Activated CD8-positive, alpha-beta memory T cell treated with anti-CD3 and anti-CD28 coated beads, Interleukin-2, amount 10 ng/mL, durations not matched to agents 7 days and 5 days (primary cell): ENCODE measurements at regions of chr3 and their contacts with region 1.

Region 1: GRCh38 chr3:150495563-150496168 is 50.6 kb downstream of the SERP1 start:
- DNase-seq: no peak
- ATAC-seq: peak; percentile 42
- H3K4me3 Mint-ChIP-seq: no peak overlapping the region
- H3K27ac Mint-ChIP-seq: no peak overlapping the region
- H3K4me1 Mint-ChIP-seq: no peaks in the 10 kb centered on the region
- H3K27me3 Mint-ChIP-seq: peaks cover 4% of the 10 kb centered on the region

Region 2: DNA sequence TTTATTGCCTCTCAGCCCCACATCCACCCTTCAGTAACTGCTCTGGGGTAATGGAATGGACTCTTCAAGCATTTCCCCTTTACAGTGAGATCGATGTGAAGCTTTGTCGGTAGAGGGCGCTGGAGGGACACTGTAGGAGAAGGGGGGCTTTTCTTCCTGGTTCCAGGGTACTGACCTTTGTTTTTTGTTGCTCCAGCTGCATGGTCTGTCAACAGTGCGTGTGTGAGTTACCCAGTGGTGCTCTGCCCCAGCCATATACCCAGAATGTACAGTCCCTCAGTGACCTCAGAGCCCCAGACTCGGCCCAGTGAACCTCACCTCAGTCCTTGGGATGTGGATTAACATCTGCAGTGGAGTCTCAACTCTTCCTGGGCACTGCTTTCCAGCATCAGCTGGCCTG is 267.8 kb before region 1 on chr3:
- CTCF ChIA-PET with region 1: interaction called, 19 read pairs
- DNase-seq: peak; percentile 64
- ATAC-seq: peak; percentile 51
- H3K4me3 Mint-ChIP-seq: no peak overlapping the region
- H3K27ac Mint-ChIP-seq: no peak overlapping the region
- H3K4me1 Mint-ChIP-seq: no peaks in the 10 kb centered on the region
- H3K27me3 Mint-ChIP-seq: peaks cover 27% of the 10 kb centered on the region

Region 3: GRCh38 chr3:150408221-150409102 is 87.2 kb before region 1 on chr3 and contains the start of gene TSC22D2:
- CTCF ChIA-PET with region 1: interaction called, 17 read pairs
- DNase-seq: peak; percentile 95
- ATAC-seq: peak; percentile 68
- H3K4me3 Mint-ChIP-seq: peak within 1 kb of the TSS; percentile 91
- H3K27ac Mint-ChIP-seq: peak within 1 kb of the TSS; percentile 94
- H3K4me1 Mint-ChIP-seq: peaks cover 27% of the 10 kb centered on the region
- H3K27me3 Mint-ChIP-seq: peaks cover 9% of the 10 kb centered on the region
- total RNA-seq, gene TSC22D2: 8.5 to 10.0 TPM